Psoas muscle (tissue), 8 donors: ENCODE measurements at regions of chr13 and their contacts with region 1.

Region 1: DNA sequence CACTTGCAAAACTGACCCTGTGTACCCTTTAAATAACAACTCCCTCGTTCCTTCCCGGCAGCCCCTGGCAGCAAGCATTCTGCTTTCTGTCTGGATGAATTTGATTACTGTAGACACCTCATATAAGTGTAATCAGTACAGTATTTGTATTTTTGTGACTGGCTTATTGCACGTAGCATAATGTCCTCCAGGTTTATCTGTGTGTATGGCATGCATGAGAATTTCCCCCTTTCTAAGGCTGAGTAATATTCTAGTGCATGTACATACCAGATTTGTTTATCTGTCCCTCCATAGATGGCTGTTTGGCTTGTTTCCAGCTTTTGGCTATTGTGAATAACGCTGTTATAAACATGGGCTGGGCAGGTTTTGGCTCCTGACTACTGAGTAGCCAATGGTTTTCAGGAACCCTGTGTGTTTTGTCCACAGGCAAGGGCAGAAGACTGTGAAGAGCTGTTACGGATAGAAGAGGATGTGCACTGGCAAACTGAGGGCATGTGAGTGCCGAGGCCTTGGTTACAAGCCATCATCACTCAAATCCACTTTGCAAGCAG is 98.0 kb downstream of the ESD start:
- DNase-seq: no peak
- ATAC-seq: no peak
- H3K4me3 ChIP-seq: no peak overlapping the region
- H3K27ac ChIP-seq: no peak overlapping the region
- H3K4me1 ChIP-seq: no peaks in the 10 kb centered on the region
- H3K27me3 ChIP-seq: no peaks in the 10 kb centered on the region
- CTCF ChIP-seq: no peak

Region 2: GRCh38 chr13:46660416-46660815 is 38.6 kb before region 1 on chr13:
- intact Hi-C with region 1: loop called in 1 of 2 experiments (anchors 2 kb)
- DNase-seq: no peak
- ATAC-seq: no peak
- H3K4me3 ChIP-seq: no peak overlapping the region
- H3K27ac ChIP-seq: no peak overlapping the region
- H3K4me1 ChIP-seq: peaks cover 11% of the 10 kb centered on the region
- H3K27me3 ChIP-seq: no peaks in the 10 kb centered on the region
- CTCF ChIP-seq: no peak

Region 3: GRCh38 chr13:46712524-46712923 is 13.5 kb after region 1 on chr13:
- intact Hi-C with region 1: no loop called
- DNase-seq: no peak
- ATAC-seq: no peak
- H3K4me3 ChIP-seq: no peak overlapping the region
- H3K27ac ChIP-seq: no peak overlapping the region
- H3K4me1 ChIP-seq: no peaks in the 10 kb centered on the region
- H3K27me3 ChIP-seq: no peaks in the 10 kb centered on the region
- CTCF ChIP-seq: no peak

Region 4: DNA sequence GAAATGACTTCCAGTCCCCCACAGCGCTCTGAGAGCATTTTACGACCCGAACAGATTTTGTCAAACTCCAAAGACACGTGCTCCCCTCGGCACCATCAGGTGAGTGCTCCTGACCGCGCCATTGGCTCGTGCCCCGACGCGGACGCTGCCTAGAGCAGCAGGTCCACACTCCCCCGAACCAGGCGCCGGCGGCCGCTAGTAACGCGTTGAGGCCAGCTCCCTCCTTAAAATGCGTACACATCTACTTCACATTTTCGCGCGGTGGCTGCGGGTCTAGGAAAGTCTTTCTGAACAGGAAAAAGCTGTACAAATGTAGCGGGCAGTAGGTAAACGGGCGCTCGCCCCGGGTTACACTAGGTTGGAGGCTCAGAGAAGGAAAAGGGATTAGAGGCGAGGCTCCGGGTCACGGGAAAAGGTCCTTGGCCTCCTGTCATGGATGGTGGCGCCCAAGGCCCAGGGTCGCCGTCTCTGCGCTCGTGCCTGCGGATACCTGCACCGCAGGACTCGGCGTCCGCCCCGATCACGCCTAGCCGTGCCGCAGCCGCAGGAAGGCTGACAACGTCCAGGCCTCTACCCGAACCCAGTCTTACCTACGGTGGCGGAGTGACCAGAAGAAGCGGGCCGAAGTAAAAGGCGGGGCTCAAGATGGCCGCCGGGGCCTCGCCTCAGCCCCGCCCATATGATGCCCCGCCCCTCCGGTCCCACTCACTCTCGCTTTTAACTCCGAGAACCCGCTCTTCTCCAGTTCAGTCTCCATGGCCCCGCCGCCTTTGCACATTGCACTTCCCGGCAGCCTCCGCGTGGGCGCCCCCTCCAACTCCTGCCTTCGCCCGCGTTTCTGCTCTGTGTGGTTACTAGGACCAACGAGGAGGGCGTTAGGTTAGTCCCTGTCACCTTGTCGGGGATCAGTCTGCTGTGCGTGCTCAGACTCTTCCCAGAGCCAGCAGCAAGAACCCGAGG is 97.8 kb after region 1 on chr13 and contains the start of gene ESD:
- intact Hi-C with region 1: no loop called
- DNase-seq: peak; percentile 95 to 96
- ATAC-seq: peak; percentile 97 to 98 (median 98)
- H3K4me3 ChIP-seq: peak within 1 kb of the TSS; percentile 96
- H3K27ac ChIP-seq: peak within 1 kb of the TSS; percentile 87
- H3K4me1 ChIP-seq: peaks cover 30% of the 10 kb centered on the region
- H3K27me3 ChIP-seq: no peaks in the 10 kb centered on the region
- CTCF ChIP-seq: no peak
- total RNA-seq, gene ESD: 70.6 to 85.8 (median 80.0) TPM

Region 5: GRCh38 chr13:46885018-46885417 is 186.0 kb after region 1 on chr13:
- intact Hi-C with region 1: no loop called
- DNase-seq: no peak
- ATAC-seq: no peak
- H3K4me3 ChIP-seq: no peak overlapping the region
- H3K27ac ChIP-seq: no peak overlapping the region
- H3K4me1 ChIP-seq: no peaks in the 10 kb centered on the region
- H3K27me3 ChIP-seq: no peaks in the 10 kb centered on the region
- CTCF ChIP-seq: no peak